T-cell (primary cell): ENCODE measurements at regions of chr15 and their contacts with region 1.

Region 1: GRCh38 chr15:95259513-95259912 is 1028.2 kb downstream of the MCTP2 start:
- DNase-seq: peak in 31 of 35 experiments; percentile 1 to 72 (median 28)
- ATAC-seq: no peak
- H3K4me3 ChIP-seq: no peak overlapping the region
- H3K4me3 Mint-ChIP-seq: no peak overlapping the region
- H3K27ac ChIP-seq: no peak overlapping the region
- H3K27ac Mint-ChIP-seq: no peak overlapping the region
- H3K4me1 ChIP-seq: no peaks in the 10 kb centered on the region
- H3K4me1 Mint-ChIP-seq: peaks cover 2 to 6% (median 3%) of the 10 kb centered on the region in 3 donors
- H3K27me3 ChIP-seq: peaks cover 3 to 6% of the 10 kb centered on the region in 2 experiments
- H3K27me3 Mint-ChIP-seq: peaks cover 31 to 43% of the 10 kb centered on the region in 2 donors

Region 2: GRCh38 chr15:95347837-95348236 is 88.3 kb after region 1 on chr15:
- CTCF ChIA-PET with region 1: no interaction called
- POLR2A ChIA-PET with region 1: no interaction called
- DNase-seq: no peak
- ATAC-seq: no peak
- H3K4me3 ChIP-seq: no peak overlapping the region
- H3K4me3 Mint-ChIP-seq: no peak overlapping the region
- H3K27ac ChIP-seq: no peak overlapping the region
- H3K27ac Mint-ChIP-seq: no peak overlapping the region
- H3K4me1 ChIP-seq: no peaks in the 10 kb centered on the region
- H3K4me1 Mint-ChIP-seq: no peaks in the 10 kb centered on the region
- H3K27me3 ChIP-seq: no peaks in the 10 kb centered on the region
- H3K27me3 Mint-ChIP-seq: peaks cover 0 to 13% of the 10 kb centered on the region in 2 donors

Region 3: GRCh38 chr15:96135166-96136093 is 875.9 kb after region 1 on chr15:
- CTCF ChIA-PET with region 1: interaction called in 1 of 2 experiments, 13 read pairs
- POLR2A ChIA-PET with region 1: no interaction called
- DNase-seq: no peak
- ATAC-seq: no peak
- H3K4me3 ChIP-seq: no peak overlapping the region
- H3K4me3 Mint-ChIP-seq: no peak overlapping the region
- H3K27ac ChIP-seq: no peak overlapping the region
- H3K27ac Mint-ChIP-seq: no peak overlapping the region
- H3K4me1 ChIP-seq: no peaks in the 10 kb centered on the region
- H3K4me1 Mint-ChIP-seq: no peaks in the 10 kb centered on the region
- H3K27me3 ChIP-seq: no peaks in the 10 kb centered on the region
- H3K27me3 Mint-ChIP-seq: peaks cover 0 to 5% of the 10 kb centered on the region in 2 donors